H1 (cell line): ENCODE measurements at regions of chr9 and their contacts with region 1.

Region 1: DNA sequence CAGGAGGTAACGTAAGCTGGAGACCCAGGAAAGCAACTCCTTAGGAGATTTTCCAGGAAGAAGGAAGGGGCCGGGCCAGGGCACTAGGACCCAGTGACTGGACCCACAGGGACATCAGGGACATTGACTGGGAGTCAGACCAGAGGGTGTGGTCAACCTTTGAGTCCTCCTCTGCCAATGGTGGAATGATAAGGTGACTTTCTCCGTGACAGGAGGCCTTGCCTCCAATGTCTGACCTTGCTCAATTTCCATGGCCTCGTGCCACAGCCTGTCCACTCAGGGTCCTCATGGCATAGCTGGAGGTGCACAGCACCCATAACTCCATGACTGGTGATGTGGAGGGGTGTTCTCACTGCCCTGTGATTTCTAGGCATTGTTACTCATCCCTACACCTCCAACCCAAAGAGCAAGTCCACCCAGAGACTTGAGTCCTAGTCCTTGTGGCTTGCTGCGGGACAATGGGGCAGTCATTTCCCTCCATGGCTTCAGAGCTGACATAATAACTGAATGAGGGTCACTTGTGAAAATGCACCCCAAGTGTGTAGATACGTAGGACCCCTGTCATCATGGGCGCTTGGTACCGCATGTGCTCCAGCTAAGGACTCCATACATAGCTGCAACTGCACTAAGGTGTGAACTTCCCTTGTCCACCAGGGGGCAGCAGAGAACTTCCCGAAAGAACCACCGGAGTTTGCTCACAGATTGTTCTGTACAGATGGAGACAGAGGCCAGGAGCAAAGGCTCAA is 4.1 kb upstream of the AMBP start:
- DNase-seq: peak in 1 of 2 experiments; percentile 97
- H3K4me3 ChIP-seq: no peak overlapping the region
- H3K27ac ChIP-seq: no peak overlapping the region
- H3K4me1 ChIP-seq: peaks cover 0 to 6% (median 3%) of the 10 kb centered on the region in 4 experiments; a peak in 4 of 7 replicates
- H3K27me3 ChIP-seq: peaks cover 0 to 3% (median under 1%) of the 10 kb centered on the region in 4 experiments; a peak in 3 of 7 replicates
- CTCF ChIP-seq: peak; percentile 83 to 96 (median 94)
- EP300 ChIP-seq: no peak
- POLR2A ChIP-seq: no peak
- RAD21 ChIP-seq: peak; percentile 94

Region 2: GRCh38 chr9:114007991-114008666 is 74.1 kb before region 1 on chr9:
- CTCF ChIA-PET with region 1: no interaction called
- POLR2A ChIA-PET with region 1: no interaction called
- DNase-seq: peak in 1 of 2 experiments; percentile 36
- H3K4me3 ChIP-seq: no peak overlapping the region
- H3K27ac ChIP-seq: no peak overlapping the region
- H3K4me1 ChIP-seq: peaks cover 0 to 5% (median 2%) of the 10 kb centered on the region in 4 experiments; a peak in 2 of 7 replicates
- H3K27me3 ChIP-seq: no peaks in the 10 kb centered on the region
- CTCF ChIP-seq: no peak
- EP300 ChIP-seq: no peak
- POLR2A ChIP-seq: no peak
- RAD21 ChIP-seq: no peak

Region 3: GRCh38 chr9:114092336-114092735 is 10.1 kb after region 1 on chr9:
- CTCF ChIA-PET with region 1: interaction called, 144 read pairs
- POLR2A ChIA-PET with region 1: interaction called, 6 read pairs
- DNase-seq: no peak
- H3K4me3 ChIP-seq: no peak overlapping the region
- H3K27ac ChIP-seq: no peak overlapping the region
- H3K4me1 ChIP-seq: no peaks in the 10 kb centered on the region; a peak in 2 of 7 replicates
- H3K27me3 ChIP-seq: peaks cover 0 to 5% (median under 1%) of the 10 kb centered on the region in 4 experiments; a peak in 2 of 7 replicates
- CTCF ChIP-seq: no peak
- EP300 ChIP-seq: no peak
- POLR2A ChIP-seq: no peak
- RAD21 ChIP-seq: no peak

Region 4: GRCh38 chr9:114131808-114132549 is 49.8 kb after region 1 on chr9:
- CTCF ChIA-PET with region 1: interaction called, 13 read pairs
- POLR2A ChIA-PET with region 1: no interaction called
- DNase-seq: no peak
- H3K4me3 ChIP-seq: no peak overlapping the region
- H3K27ac ChIP-seq: no peak overlapping the region
- H3K4me1 ChIP-seq: peaks cover 0 to 2% (median 0%) of the 10 kb centered on the region in 4 experiments; a peak in 2 of 7 replicates
- H3K27me3 ChIP-seq: no peaks in the 10 kb centered on the region; a peak in 1 of 7 replicates
- CTCF ChIP-seq: no peak
- EP300 ChIP-seq: no peak
- POLR2A ChIP-seq: no peak
- RAD21 ChIP-seq: no peak

Region 5: DNA sequence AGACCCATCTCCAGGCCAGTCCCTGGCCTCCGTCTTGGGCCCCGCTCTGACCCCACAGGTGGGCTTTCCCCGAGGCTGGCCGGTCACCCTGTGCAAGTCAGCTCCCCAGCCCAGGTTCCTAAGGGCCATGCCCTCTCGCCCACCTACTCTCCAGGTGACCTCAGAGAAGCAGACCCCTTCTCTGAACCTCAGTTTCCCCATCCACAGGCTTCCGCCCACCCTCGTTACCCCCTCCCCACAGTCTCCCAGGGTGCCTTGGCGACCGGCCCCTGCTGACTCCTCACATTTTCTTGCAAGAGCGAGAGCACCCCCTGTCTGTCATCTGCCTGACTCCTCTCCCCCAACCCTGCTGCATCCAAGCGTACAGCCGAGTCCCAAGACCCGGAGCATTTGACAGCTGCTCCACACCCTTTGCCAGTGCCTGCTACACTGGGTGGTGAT is 189.5 kb after region 1 on chr9:
- CTCF ChIA-PET with region 1: interaction called, 24 read pairs
- POLR2A ChIA-PET with region 1: no interaction called
- DNase-seq: peak in 1 of 2 experiments; percentile 80
- H3K4me3 ChIP-seq: no peak overlapping the region
- H3K27ac ChIP-seq: no peak overlapping the region
- H3K4me1 ChIP-seq: no peaks in the 10 kb centered on the region
- H3K27me3 ChIP-seq: no peaks in the 10 kb centered on the region
- CTCF ChIP-seq: peak; percentile 66 to 69 (median 66)
- EP300 ChIP-seq: no peak
- POLR2A ChIP-seq: no peak
- RAD21 ChIP-seq: peak; percentile 70 to 77

Region 6: DNA sequence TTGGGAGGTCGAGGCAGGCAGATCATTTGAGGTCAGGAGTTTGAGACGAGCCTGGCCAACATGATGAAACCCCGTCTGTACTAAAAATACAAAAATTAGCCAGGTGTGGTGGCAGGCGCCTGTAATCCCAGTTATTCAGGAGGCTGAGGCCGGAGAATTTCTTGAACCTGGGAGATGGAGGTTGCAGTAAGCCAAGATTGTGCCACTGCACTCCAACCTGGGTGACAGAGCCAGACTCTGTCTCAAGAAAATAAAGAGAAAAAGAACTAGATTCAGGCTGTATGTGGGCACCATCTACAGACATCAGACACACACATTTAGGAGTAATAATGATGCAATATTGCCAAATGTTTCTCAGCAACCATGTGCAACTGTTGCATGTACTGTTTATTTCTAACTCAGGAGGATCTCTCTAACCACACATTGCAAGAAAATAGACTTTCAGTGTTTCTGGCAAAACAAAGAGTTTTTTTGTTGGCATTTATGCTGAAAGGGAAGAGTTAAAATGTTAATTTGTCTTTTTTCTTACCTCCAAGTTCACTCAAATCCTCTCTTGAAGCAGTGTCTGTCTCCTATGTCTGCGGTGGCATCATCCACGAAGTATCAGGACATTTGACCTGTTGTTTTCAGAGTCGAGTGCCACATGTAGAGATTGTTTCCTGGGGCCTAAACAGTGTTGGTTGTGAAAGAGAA is 235.6 kb after region 1 on chr9:
- CTCF ChIA-PET with region 1: interaction called, 29 read pairs
- POLR2A ChIA-PET with region 1: no interaction called
- DNase-seq: peak in 1 of 2 experiments; percentile 22
- H3K4me3 ChIP-seq: no peak overlapping the region
- H3K27ac ChIP-seq: no peak overlapping the region
- H3K4me1 ChIP-seq: no peaks in the 10 kb centered on the region
- H3K27me3 ChIP-seq: no peaks in the 10 kb centered on the region
- CTCF ChIP-seq: no peak
- EP300 ChIP-seq: no peak
- POLR2A ChIP-seq: no peak
- RAD21 ChIP-seq: no peak